ENCODE measurements at regions of chr4 and their contacts with region 1.

Region 1: GRCh38 chr4:36081185-36081584 is 163.1 kb downstream of the ARAP2 start:
- DNase-seq: peak; percentile 48
- H3K4me3 Mint-ChIP-seq: no peak overlapping the region
- H3K27ac Mint-ChIP-seq: no peak overlapping the region
- H3K4me1 Mint-ChIP-seq: peaks cover 2% of the 10 kb centered on the region
- H3K27me3 Mint-ChIP-seq: no peaks in the 10 kb centered on the region

Region 2: GRCh38 chr4:35970366-35970960 is 110.7 kb before region 1 on chr4:
- CTCF ChIA-PET with region 1: no interaction called
- intact Hi-C with region 1: loop called (anchors 1 kb)
- DNase-seq: no peak
- H3K4me3 Mint-ChIP-seq: no peak overlapping the region
- H3K27ac Mint-ChIP-seq: no peak overlapping the region
- H3K4me1 Mint-ChIP-seq: peaks cover 8% of the 10 kb centered on the region
- H3K27me3 Mint-ChIP-seq: no peaks in the 10 kb centered on the region

Region 3: GRCh38 chr4:35975617-35976355 is 105.4 kb before region 1 on chr4:
- CTCF ChIA-PET with region 1: no interaction called
- intact Hi-C with region 1: loop called (anchors 1 kb)
- DNase-seq: no peak
- H3K4me3 Mint-ChIP-seq: no peak overlapping the region
- H3K27ac Mint-ChIP-seq: no peak overlapping the region
- H3K4me1 Mint-ChIP-seq: peaks cover 12% of the 10 kb centered on the region
- H3K27me3 Mint-ChIP-seq: no peaks in the 10 kb centered on the region

Region 4: GRCh38 chr4:36026348-36026880 is 54.8 kb before region 1 on chr4:
- CTCF ChIA-PET with region 1: no interaction called
- intact Hi-C with region 1: no loop called
- DNase-seq: no peak
- H3K4me3 Mint-ChIP-seq: no peak overlapping the region
- H3K27ac Mint-ChIP-seq: no peak overlapping the region
- H3K4me1 Mint-ChIP-seq: no peaks in the 10 kb centered on the region
- H3K27me3 Mint-ChIP-seq: no peaks in the 10 kb centered on the region

Region 5: DNA sequence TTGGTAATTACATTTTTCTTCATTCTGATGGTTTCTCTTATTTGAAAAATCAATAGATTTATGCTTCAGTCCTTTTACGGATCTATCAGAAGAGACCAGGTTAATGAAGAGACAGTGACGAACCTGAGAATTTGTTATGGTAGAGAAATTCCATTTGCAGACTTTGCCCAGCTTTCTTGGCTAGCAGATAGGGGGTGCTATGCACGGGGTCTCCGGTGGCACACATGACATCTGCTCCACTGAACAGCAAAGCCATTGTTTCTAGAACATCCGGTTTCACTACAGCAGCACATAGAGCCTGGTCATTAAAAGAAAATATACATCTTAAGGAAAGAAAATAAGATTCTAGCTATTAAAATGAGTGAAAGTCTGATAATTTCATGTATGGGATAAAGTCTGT is 78.0 kb after region 1 on chr4:
- CTCF ChIA-PET with region 1: no interaction called
- intact Hi-C with region 1: no loop called
- DNase-seq: no peak
- H3K4me3 Mint-ChIP-seq: no peak overlapping the region
- H3K27ac Mint-ChIP-seq: no peak overlapping the region
- H3K4me1 Mint-ChIP-seq: peaks cover 4% of the 10 kb centered on the region
- H3K27me3 Mint-ChIP-seq: no peaks in the 10 kb centered on the region

Region 6: GRCh38 chr4:36244257-36245079 is 163.3 kb after region 1 on chr4 and contains the start of gene ARAP2:
- CTCF ChIA-PET with region 1: no interaction called
- intact Hi-C with region 1: loop called (anchors 1 kb)
- DNase-seq: peak; percentile 77
- H3K4me3 Mint-ChIP-seq: peak within 1 kb of the TSS; percentile 94
- H3K27ac Mint-ChIP-seq: peak within 1 kb of the TSS; percentile 88
- H3K4me1 Mint-ChIP-seq: peaks cover 24% of the 10 kb centered on the region
- H3K27me3 Mint-ChIP-seq: no peaks in the 10 kb centered on the region
- total RNA-seq, gene ARAP2: 29.6 to 38.2 TPM